G401 (cell line): ENCODE measurements at regions of chr20 and their contacts with region 1.

Region 1: DNA sequence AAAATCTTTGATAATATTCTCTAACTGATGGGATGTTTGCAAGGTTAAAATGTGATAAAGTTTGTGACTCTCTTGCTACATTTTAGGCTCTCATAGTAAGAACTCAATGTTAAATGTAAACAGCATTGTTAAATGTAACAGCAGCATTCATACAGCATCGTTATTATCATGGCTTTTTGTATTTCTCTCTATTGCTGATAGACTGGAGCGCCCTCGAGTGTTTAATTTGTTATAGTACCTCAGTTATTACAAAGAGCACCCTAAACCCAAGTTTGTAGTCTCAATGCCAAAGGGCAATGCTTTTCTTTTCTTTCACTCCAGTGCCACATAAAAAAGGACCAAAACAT is 14.9 kb upstream of the TTPAL start:
- DNase-seq: peak; percentile 40

Region 2: GRCh38 chr20:44326391-44327159 is 134.2 kb before region 1 on chr20:
- in situ Hi-C with region 1: loop called (anchors 10 kb)
- DNase-seq: no peak

Region 3: DNA sequence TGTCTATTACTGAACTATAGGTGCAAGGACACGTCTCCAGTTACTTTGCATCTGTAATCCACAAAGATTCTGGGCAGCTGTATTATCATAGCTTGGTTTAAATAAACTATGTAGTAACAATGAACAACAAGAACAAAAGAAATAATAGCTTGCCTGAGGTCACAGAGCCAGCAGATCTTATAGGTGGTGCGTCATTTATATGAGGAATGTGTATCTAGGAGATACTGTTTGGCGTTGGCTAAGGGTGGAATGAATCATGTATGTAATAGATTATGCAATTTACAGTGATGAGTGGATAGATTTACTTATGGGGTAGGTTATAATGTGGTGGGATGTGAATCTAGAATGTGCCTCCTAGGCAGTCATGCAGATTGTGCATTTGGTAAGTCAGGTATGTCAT is 62.5 kb before region 1 on chr20:
- in situ Hi-C with region 1: loop called (anchors 10 kb)
- DNase-seq: no peak

Region 4: GRCh38 chr20:44422083-44422482 is 38.7 kb before region 1 on chr20:
- in situ Hi-C with region 1: no loop called
- DNase-seq: no peak